KBM-7 (cell line): ENCODE measurements at regions of chr10 and their contacts with region 1.

Region 1: GRCh38 chr10:132452631-132453469 is 55.9 kb downstream of the PWWP2B start:
- DNase-seq: peak; percentile 79

Region 2: GRCh38 chr10:132237871-132238270 is 215.0 kb before region 1 on chr10:
- in situ Hi-C with region 1: no loop called
- DNase-seq: no peak

Region 3: DNA sequence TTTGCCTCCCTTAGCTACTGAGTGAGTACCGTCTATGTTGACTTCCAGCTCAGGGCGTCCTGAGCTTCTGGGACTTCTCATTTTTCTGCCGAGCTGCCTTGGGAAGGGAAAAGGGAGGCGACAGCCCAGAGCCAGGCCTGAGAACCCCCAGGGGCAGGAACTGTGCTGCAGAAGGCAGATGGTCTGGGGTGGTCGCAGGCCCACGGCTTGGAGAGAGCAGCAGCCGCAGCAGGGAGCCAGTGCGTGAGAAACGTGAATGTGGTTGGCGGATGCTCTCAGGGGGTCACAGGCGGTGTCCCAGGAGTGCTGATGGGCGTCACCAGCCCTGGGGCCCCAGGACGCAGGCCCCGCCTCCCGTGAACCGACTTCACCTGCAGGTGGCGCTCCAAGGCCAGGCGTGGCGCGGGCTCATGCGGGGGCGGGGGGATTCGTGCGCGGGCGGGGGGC is 65.1 kb before region 1 on chr10:
- in situ Hi-C with region 1: loop called (anchors 10 kb)
- DNase-seq: peak; percentile 84

Region 4: GRCh38 chr10:132540456-132540855 is 87.6 kb after region 1 on chr10:
- in situ Hi-C with region 1: no loop called
- DNase-seq: no peak

Region 5: DNA sequence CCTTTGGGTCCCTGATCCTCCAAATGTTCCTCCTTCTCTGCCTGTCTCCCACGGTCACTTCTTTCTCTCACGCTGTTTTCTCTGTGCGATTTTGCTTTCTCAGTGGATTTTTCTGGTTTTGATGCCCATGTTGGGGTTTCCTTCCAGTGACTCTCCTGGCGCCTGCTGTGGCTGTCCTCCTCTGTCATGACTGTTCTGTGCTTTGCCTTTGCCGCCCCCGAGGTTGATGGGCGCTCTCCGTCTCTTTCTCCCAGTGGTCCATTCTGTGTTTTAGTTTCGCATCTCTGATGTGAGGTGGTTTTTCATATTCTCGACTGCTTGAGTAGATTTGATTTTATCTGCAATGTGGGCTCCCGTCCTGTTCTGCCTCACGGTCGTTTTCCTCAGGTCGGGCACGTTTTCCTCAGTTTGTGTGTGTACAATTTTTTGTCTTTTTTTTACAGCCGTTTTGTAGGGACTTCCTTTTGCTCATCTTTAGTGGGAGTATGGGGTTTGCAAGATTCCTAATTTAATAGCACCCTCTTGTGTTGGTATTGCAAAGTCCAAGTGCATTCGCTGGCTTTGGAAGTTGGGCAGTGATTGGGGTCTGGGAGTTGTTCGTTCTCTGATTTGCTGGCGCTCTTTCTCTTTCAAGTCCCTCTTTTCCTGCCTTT is 184.8 kb after region 1 on chr10:
- in situ Hi-C with region 1: loop called (anchors 10 kb)
- DNase-seq: peak; percentile 83